ENCODE measurements at regions of chr19 and their contacts with region 1.

Region 1: GRCh38 chr19:58362272-58362994 is at the start of gene ZNF497:
- DNase-seq: peak; percentile 99 to 100
- ATAC-seq: peak; percentile 89 to 95
- H3K4me3 ChIP-seq: peak within 1 kb of the TSS; percentile 58
- H3K27ac ChIP-seq: peak within 1 kb of the TSS; percentile 82 to 88
- H3K4me1 ChIP-seq: peaks cover 7% of the 10 kb centered on the region; the same call in 1 of the 3 replicates
- CTCF ChIP-seq: no peak
- EP300 ChIP-seq: no peak
- POLR2A ChIP-seq: peak; percentile 63
- RAD21 ChIP-seq: no peak
- polyA plus RNA-seq, gene ZNF497: 1.1 and 1.4 TPM in 2 replicates

Region 2: GRCh38 chr19:58182989-58183816 is 179.2 kb before region 1 on chr19 and contains the start of gene ZNF274:
- CTCF ChIA-PET with region 1: interaction called, 3 read pairs
- POLR2A ChIA-PET with region 1: interaction called, 22 read pairs
- DNase-seq: peak; percentile 96 to 98
- ATAC-seq: peak; percentile 96
- H3K4me3 ChIP-seq: peak within 1 kb of the TSS; percentile 83
- H3K27ac ChIP-seq: peak within 1 kb of the TSS; percentile 92 to 94
- H3K4me1 ChIP-seq: no peaks in the 10 kb centered on the region
- CTCF ChIP-seq: no peak; the same call in 2 of the 3 replicates
- EP300 ChIP-seq: no peak
- POLR2A ChIP-seq: peak; percentile 72
- RAD21 ChIP-seq: 0 out of 5 replicates have a peak, but pooled peaks of 1 of the 2 experiments have one; percentile 22
- polyA plus RNA-seq, gene ZNF274: 27.3 and 28.7 TPM in 2 replicates

Region 3: DNA sequence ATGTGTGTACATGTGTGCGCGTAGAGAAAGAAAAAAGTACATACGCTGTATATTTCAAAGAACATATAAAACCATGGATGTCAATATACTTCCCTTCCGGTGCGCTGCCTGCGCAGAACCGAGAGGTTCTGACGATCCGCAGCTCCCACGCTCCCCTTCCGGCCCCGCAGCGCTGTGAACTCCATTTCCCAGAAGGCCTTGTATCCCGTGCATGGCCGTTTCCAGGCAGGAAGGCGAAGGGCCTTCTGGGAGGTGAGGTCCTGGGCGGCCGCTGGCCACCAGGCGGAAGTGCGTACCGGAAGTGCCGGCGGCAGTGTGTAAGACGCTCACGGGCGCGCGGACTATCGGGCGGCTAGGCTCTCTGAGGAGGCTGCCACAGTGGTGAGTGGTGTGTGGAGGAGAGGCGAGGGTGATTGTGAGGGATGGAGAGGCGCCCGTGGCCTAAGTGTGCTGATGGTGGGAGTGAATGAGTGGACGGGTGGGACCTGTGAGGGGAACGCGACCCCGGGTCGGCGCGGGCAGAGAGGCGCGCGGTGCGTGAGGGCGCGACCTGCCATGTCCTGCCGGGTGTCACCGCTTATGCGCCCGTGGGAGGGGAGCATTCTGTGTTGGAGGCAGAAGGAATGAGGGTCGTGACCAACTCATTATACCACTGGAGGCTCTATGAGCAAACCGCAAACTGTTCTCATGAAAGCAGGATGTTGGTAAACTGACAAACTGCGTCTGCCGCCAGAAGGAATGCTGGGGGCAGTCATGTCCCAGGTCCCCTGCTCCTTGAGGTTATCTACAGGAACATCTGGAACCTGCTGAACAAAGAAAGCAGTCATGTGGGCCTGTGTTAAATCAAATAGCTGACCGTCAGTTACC is 57.1 kb before region 1 on chr19 and contains the start of gene ERVK3-1:
- CTCF ChIA-PET with region 1: interaction called, 3 read pairs
- POLR2A ChIA-PET with region 1: interaction called, 22 read pairs
- DNase-seq: peak; percentile 99
- ATAC-seq: peak; percentile 100
- H3K4me3 ChIP-seq: peak within 1 kb of the TSS; percentile 72
- H3K27ac ChIP-seq: peak within 1 kb of the TSS; percentile 77 to 89
- H3K4me1 ChIP-seq: 0 out of 3 replicates have a peak, but pooled peaks cover 4% of the 10 kb centered on the region
- CTCF ChIP-seq: no peak
- EP300 ChIP-seq: no peak
- POLR2A ChIP-seq: peak; percentile 97
- RAD21 ChIP-seq: 0 out of 5 replicates have a peak, but pooled peaks of 1 of the 2 experiments have one; percentile 20
- polyA plus RNA-seq, gene ERVK3-1: 112 and 142 TPM in 2 replicates

Region 4: GRCh38 chr19:58326914-58327726 is 35.3 kb before region 1 on chr19 and contains the start of gene ZSCAN22:
- CTCF ChIA-PET with region 1: interaction called, 4 read pairs
- POLR2A ChIA-PET with region 1: interaction called, 41 read pairs
- DNase-seq: peak; percentile 99
- ATAC-seq: peak; percentile 96 to 97
- H3K4me3 ChIP-seq: peak within 1 kb of the TSS; percentile 69
- H3K27ac ChIP-seq: peak within 1 kb of the TSS; percentile 88 to 95
- H3K4me1 ChIP-seq: peaks cover 13% of the 10 kb centered on the region; the same call in 2 of the 3 replicates
- CTCF ChIP-seq: no peak
- EP300 ChIP-seq: no peak
- POLR2A ChIP-seq: peak; percentile 59
- RAD21 ChIP-seq: peak in 1 of 2 experiments; percentile 40; a peak in 1 of 5 replicates
- polyA plus RNA-seq, gene ZSCAN22: 4.4 and 5.3 TPM in 2 replicates

Region 5: GRCh38 chr19:58372311-58373133 is 10.1 kb after region 1 on chr19:
- CTCF ChIA-PET with region 1: interaction called, 10 read pairs
- POLR2A ChIA-PET with region 1: interaction called, 43 read pairs
- DNase-seq: no peak
- ATAC-seq: peak; percentile 39 to 45; a peak in 3 of 6 replicates
- H3K4me3 ChIP-seq: no peak overlapping the region
- H3K27ac ChIP-seq: no peak overlapping the region
- H3K4me1 ChIP-seq: no peaks in the 10 kb centered on the region
- CTCF ChIP-seq: no peak
- EP300 ChIP-seq: no peak
- POLR2A ChIP-seq: no peak
- RAD21 ChIP-seq: 0 out of 5 replicates have a peak, but pooled peaks of 1 of the 2 experiments have one; percentile 21

Region 6: GRCh38 chr19:58386576-58387337 is 24.3 kb after region 1 on chr19 and contains the start of gene RPS5:
- CTCF ChIA-PET with region 1: interaction called, 4 read pairs
- POLR2A ChIA-PET with region 1: interaction called, 28 read pairs
- DNase-seq: peak; percentile 99 to 100
- ATAC-seq: peak; percentile 82 to 91
- H3K4me3 ChIP-seq: peak within 1 kb of the TSS; percentile 81
- H3K27ac ChIP-seq: peak within 1 kb of the TSS; percentile 99
- H3K4me1 ChIP-seq: peaks cover 45% of the 10 kb centered on the region
- CTCF ChIP-seq: no peak
- EP300 ChIP-seq: no peak
- POLR2A ChIP-seq: peak; percentile 85
- RAD21 ChIP-seq: no peak; a peak in 1 of 5 replicates
- polyA plus RNA-seq, gene RPS5: 2,475 and 2,940 TPM in 2 replicates

Region 7: DNA sequence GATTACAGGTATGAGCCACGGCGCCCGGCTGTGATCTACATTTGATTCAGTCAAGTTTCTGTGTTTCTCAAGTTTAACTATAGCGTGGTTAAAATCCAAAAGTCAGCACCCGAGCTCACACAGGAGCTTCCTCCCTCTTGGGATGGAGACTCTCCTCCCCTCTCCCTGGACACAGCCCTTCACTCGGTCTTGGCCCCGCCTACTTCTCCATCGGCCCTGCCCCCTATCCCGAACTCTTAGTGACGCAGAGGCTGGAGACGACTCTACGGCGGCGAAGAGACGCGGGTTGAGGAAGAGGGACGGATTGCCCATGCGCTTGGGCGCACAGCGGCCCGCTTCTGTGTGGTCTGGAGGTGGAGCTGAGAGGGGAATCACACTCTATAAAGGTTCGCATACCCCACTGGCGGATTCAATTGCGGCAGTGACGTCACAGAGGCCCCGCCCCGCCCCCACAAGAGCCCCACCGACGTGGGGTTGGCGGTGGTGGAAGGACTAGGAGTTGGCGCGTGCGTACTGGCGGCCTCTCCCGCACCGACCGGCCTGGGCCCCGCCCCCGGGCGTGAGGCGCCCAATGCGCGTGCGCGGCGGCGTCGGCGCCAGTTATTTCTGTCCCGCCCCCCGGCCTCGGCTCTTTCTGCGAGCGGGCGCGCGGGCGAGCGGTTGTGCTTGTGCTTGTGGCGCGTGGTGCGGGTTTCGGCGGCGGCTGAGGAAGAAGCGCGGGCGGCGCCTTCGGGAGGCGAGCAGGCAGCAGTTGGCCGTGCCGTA is 181.6 kb after region 1 on chr19 and contains the start of gene TRIM28:
- CTCF ChIA-PET with region 1: no interaction called
- POLR2A ChIA-PET with region 1: interaction called, 23 read pairs
- DNase-seq: peak; percentile 100
- ATAC-seq: peak; percentile 93 to 97
- H3K4me3 ChIP-seq: peak within 1 kb of the TSS; percentile 97
- H3K27ac ChIP-seq: peak within 1 kb of the TSS; percentile 87 to 95
- H3K4me1 ChIP-seq: peaks cover 23% of the 10 kb centered on the region
- CTCF ChIP-seq: no peak
- EP300 ChIP-seq: no peak
- POLR2A ChIP-seq: peak; percentile 98
- RAD21 ChIP-seq: no peak; a peak in 1 of 5 replicates
- polyA plus RNA-seq, gene TRIM28: 576 and 735 TPM in 2 replicates